Activated CD4-positive, alpha-beta T cell treated with anti-CD3 and anti-CD28 coated beads for 36 hours (primary cell): ENCODE measurements at regions of chr5 and their contacts with region 1.

Region 1: GRCh38 chr5:145825751-145826180 is 9.4 kb downstream of the PRELID2 start:
- DNase-seq: no peak
- ATAC-seq: peak; percentile 44
- H3K4me3 Mint-ChIP-seq: no peak overlapping the region
- H3K27ac Mint-ChIP-seq: no peak overlapping the region
- H3K4me1 Mint-ChIP-seq: peaks cover 3% of the 10 kb centered on the region
- H3K27me3 Mint-ChIP-seq: peaks cover 1% of the 10 kb centered on the region

Region 2: DNA sequence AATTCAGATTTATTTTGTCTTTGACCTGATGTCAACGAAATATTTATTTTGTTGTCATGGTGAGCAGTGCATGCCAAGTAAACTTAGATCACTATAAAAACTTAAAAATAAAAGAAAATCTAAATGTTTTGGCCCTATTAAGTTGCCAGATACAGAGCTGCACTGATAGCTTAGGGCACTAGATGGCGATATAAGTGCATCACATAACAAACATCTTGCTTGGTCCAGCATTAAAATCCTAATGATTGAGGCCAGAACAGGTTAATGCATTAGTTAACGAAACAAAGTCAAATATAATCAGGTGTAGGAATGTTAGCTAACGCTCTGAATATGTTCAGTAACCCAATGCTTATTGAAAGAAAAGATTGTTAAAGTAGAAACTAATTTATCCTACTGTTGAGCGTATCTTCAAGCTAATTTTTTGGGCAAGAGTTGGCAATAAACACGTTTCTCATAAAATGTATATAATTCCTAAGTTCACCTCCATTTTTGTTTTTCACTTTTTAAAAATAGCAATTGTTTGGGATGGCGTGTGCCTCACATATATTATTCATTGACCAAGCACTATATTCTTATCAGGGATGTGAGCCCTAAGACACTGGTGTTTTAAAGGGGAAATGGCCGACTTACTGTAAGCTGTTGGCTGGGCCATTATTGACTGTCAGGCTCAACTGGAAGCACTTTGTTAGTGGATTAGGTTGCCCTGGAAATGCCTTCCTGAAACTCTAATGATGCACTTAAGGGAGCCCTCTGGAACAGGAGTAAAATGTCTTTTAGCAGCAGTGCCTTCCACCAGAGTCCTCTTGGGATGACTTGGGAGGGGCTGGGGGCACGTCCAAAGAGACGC is 1621.8 kb before region 1 on chr5:
- CTCF ChIA-PET with region 1: interaction called, 12 read pairs
- POLR2A ChIA-PET with region 1: no interaction called
- intact Hi-C with region 1: loop called (anchors 1 to 2 kb)
- DNase-seq: peak; percentile 44
- ATAC-seq: peak; percentile 61
- H3K4me3 Mint-ChIP-seq: no peak overlapping the region
- H3K27ac Mint-ChIP-seq: no peak overlapping the region
- H3K4me1 Mint-ChIP-seq: peaks cover 17% of the 10 kb centered on the region
- H3K27me3 Mint-ChIP-seq: peaks cover 44% of the 10 kb centered on the region

Region 3: GRCh38 chr5:144896473-144896872 is 929.3 kb before region 1 on chr5:
- CTCF ChIA-PET with region 1: no interaction called
- POLR2A ChIA-PET with region 1: no interaction called
- intact Hi-C with region 1: no loop called
- DNase-seq: no peak
- ATAC-seq: no peak
- H3K4me3 Mint-ChIP-seq: no peak overlapping the region
- H3K27ac Mint-ChIP-seq: no peak overlapping the region
- H3K4me1 Mint-ChIP-seq: no peaks in the 10 kb centered on the region
- H3K27me3 Mint-ChIP-seq: no peaks in the 10 kb centered on the region

Region 4: DNA sequence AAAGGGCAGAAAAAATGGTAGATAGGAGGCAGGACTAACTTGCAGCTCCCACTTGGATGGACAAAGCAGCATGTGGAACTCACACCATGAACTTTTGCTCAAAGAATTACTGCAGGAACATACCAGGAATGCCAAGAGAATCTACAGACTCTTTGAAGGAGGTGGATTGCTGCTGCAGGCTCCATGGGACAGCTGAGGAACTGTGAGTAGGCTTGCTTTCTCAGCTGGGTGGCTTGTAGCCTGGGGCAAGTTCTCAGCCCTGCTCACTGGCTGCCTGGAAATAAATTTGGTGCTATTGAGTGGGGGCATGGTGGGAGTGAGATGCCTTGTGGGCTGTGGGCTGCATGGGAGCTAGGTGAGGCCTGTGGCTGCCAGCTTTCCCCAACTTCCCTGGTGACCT is 565.1 kb before region 1 on chr5:
- CTCF ChIA-PET with region 1: no interaction called
- POLR2A ChIA-PET with region 1: no interaction called
- intact Hi-C with region 1: no loop called
- DNase-seq: no peak
- ATAC-seq: no peak
- H3K4me3 Mint-ChIP-seq: no peak overlapping the region
- H3K27ac Mint-ChIP-seq: no peak overlapping the region
- H3K4me1 Mint-ChIP-seq: no peaks in the 10 kb centered on the region
- H3K27me3 Mint-ChIP-seq: no peaks in the 10 kb centered on the region

Region 5: GRCh38 chr5:145681686-145682085 is 144.1 kb before region 1 on chr5:
- CTCF ChIA-PET with region 1: interaction called, 6 read pairs
- POLR2A ChIA-PET with region 1: no interaction called
- intact Hi-C with region 1: loop called (anchors 1 kb)
- DNase-seq: peak; percentile 60
- ATAC-seq: peak; percentile 94
- H3K4me3 Mint-ChIP-seq: no peak overlapping the region
- H3K27ac Mint-ChIP-seq: no peak overlapping the region
- H3K4me1 Mint-ChIP-seq: peaks cover 3% of the 10 kb centered on the region
- H3K27me3 Mint-ChIP-seq: no peaks in the 10 kb centered on the region

Region 6: DNA sequence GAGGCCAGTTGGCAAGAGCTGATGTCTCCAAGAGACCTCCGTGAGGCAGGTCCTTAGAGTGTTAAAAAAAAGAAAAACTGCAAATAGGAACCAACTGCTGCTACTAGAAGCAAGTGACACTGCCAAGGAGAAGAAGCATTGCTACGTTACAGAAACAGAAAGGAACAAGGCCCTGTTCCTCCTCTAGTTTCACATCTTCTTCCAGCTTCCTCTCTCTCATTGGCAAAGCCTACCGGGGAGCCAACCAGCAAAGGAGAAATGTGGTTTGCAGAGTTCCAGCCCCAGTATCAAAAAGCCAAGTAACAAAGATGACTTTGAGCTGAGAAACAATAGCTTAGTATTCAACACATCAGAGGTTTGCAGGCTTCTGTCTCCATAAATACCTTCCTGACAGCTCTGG is 136.5 kb before region 1 on chr5:
- CTCF ChIA-PET with region 1: interaction called, 10 read pairs
- POLR2A ChIA-PET with region 1: no interaction called
- intact Hi-C with region 1: no loop called
- DNase-seq: no peak
- ATAC-seq: no peak
- H3K4me3 Mint-ChIP-seq: no peak overlapping the region
- H3K27ac Mint-ChIP-seq: no peak overlapping the region
- H3K4me1 Mint-ChIP-seq: peaks cover 3% of the 10 kb centered on the region
- H3K27me3 Mint-ChIP-seq: no peaks in the 10 kb centered on the region

Region 7: DNA sequence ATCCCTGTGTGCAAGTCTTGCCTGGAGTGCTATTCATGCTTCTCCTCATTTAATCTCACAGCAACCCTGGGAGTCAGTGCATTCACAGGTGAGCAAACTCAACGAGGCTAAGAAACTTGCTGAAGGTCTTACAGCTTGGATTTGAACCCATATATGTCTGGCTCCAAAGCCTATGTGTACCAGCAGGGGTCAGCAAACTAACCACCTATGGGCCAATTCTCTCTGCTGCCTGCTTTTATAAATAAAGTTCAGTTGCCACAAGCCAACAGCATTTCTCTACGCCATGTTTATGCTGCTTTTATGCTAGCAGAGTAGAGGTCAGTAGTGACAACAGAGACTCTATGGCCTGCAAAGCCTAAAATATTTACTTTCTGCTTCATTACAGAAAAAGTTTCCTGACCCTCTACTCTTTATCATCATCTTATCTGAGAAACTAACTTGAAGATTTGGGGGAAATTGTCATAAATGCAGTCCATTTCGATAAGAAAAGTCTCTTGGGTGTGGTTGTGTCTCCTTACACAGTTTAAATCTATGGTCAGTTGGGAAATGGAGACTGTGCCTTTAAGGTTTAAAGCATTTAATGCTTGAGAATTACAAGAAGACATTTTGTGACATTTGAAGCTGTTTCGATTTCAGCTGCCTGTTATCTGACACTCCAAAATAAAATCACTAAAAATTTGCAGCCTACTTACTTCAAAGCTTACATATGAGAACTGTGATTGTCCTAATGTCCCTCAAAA is 128.3 kb before region 1 on chr5:
- CTCF ChIA-PET with region 1: interaction called, 13 read pairs
- POLR2A ChIA-PET with region 1: no interaction called
- intact Hi-C with region 1: loop called (anchors 1 kb)
- DNase-seq: peak; percentile 46
- ATAC-seq: no peak
- H3K4me3 Mint-ChIP-seq: no peak overlapping the region
- H3K27ac Mint-ChIP-seq: no peak overlapping the region
- H3K4me1 Mint-ChIP-seq: no peaks in the 10 kb centered on the region
- H3K27me3 Mint-ChIP-seq: no peaks in the 10 kb centered on the region

Region 8: DNA sequence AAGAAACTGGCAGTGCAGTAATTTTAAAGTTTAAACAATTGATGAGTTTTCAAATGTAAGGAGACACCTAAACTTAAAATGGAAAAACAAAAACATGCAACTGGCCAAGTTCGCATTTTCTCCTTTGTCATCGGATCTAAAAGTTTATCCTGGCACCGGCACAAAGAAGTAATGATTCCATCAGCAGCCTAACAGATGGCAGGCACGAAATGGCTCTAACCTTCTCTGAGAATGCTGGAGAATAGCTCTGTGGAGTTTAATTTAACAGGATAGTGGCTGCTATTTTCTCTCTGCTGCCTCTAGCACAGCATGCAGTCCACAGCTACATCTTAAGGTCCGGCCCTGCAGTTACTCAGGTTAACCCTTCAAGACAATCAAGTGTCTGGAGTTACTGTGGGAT is 72.8 kb before region 1 on chr5:
- CTCF ChIA-PET with region 1: no interaction called
- POLR2A ChIA-PET with region 1: no interaction called
- intact Hi-C with region 1: no loop called
- DNase-seq: no peak
- ATAC-seq: no peak
- H3K4me3 Mint-ChIP-seq: no peak overlapping the region
- H3K27ac Mint-ChIP-seq: no peak overlapping the region
- H3K4me1 Mint-ChIP-seq: no peaks in the 10 kb centered on the region
- H3K27me3 Mint-ChIP-seq: no peaks in the 10 kb centered on the region

Region 9: DNA sequence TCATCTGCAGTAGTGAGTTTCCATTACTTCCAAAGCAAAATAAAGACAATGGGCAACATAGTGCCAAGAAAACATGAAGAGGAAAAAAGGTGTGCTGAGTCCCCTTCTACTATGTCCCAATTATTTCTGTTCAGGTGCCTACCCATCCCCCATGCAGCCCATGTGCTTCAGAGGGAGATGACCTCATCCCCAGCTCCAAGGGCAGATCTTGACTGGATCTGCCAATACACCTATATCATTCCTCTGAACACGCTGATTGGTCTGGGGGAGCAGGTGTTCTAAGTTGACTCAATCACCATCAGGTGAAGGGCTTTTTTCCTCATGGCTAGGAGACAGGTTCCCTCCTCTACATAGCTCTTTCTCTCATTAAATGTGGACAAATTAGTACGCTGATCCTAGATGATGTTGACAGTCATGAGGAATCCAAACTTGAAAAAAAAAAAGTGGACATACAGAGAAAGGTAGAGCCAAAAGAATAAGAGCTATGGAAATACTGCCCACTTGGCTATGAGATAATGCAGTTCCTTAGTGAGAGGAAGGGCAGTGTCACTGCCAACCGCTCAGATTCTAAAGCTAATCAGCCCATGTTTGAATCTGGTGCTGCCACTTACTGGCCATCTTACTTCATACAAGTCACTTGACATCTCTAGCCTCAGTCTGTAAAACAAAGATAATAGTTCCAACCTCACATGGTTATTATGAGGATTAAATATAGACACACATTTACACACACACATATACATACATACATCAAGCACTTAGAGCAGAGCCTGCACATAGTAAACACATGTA is 13.7 kb before region 1 on chr5:
- CTCF ChIA-PET with region 1: no interaction called
- POLR2A ChIA-PET with region 1: no interaction called
- intact Hi-C with region 1: no loop called
- DNase-seq: no peak
- ATAC-seq: no peak
- H3K4me3 Mint-ChIP-seq: no peak overlapping the region
- H3K27ac Mint-ChIP-seq: no peak overlapping the region
- H3K4me1 Mint-ChIP-seq: no peaks in the 10 kb centered on the region
- H3K27me3 Mint-ChIP-seq: no peaks in the 10 kb centered on the region

Region 10: DNA sequence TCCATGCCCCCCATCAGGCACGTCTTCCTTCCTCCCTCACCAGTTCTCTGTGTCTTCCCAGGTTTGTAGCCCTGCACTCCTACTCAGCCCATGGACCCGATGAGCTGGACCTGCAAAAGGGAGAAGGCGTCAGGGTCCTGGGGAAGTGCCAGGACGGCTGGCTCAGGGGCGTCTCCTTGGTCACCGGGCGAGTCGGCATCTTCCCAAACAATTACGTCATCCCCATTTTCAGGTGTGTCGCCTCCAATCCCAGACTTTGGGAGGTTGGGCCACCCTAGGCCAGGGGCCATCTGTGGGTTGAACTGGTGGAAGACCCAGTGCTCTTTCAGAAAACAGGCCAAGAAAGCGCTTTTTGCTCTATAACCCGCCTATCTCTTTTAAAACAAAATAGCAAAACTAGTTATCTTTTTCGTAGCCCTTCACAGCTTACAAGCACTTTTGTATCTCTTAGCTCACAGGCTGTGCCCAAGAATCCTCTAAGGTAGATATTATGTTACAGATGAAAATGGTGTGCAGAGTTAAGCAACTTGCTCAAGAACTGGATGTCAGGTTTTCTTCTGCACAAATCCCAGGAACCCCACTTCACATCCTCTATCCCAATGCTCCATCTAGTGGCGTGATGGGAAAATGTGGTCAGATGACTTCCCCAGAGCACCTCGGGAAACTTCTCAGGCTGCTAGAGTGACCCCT is 223.4 kb after region 1 on chr5:
- CTCF ChIA-PET with region 1: interaction called, 3 read pairs
- POLR2A ChIA-PET with region 1: no interaction called
- intact Hi-C with region 1: loop called (anchors 2 to 5 kb)
- DNase-seq: peak; percentile 58
- ATAC-seq: no peak
- H3K4me3 Mint-ChIP-seq: no peak overlapping the region
- H3K27ac Mint-ChIP-seq: no peak overlapping the region
- H3K4me1 Mint-ChIP-seq: no peaks in the 10 kb centered on the region
- H3K27me3 Mint-ChIP-seq: peaks cover 9% of the 10 kb centered on the region

Region 11: DNA sequence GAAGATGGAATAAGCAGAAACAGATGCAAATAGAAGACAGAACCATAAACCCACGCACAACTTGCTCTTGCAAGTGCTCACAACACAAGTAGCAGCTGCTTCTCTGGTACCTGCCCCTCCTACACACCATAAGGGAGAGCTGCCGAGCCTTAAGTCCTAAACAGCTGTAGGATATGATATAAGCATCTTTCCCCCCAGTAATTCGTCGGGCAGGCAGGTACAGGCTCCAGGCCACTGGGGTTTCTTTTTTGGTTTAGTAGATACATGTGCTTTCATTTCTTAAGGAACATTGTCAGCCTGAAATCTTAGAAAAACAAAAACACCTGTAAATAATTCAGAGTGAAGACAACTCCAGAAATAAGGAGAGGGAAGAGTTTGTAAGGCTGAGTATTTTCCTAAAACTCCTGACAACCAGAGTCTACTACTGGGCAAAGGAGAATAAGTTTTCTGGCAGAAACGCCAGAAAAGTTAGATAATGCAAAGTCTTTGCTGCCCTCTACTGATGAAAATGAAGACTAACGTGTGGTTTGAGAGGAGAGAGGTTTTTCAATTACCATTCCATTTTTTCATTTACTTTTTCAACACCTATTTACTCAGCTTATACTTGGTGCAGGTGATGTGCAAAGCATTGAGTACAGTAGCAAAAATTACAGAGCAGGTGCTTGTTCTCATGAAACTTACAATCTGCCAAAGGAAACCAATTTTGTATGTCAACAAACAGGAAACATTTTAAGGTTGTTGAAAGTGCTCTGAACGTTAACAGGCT is 601.3 kb after region 1 on chr5:
- CTCF ChIA-PET with region 1: no interaction called
- POLR2A ChIA-PET with region 1: no interaction called
- intact Hi-C with region 1: loop called in 1 of 2 experiments (anchors 2 kb)
- DNase-seq: no peak
- ATAC-seq: peak; percentile 53
- H3K4me3 Mint-ChIP-seq: no peak overlapping the region
- H3K27ac Mint-ChIP-seq: no peak overlapping the region
- H3K4me1 Mint-ChIP-seq: peaks cover 4% of the 10 kb centered on the region
- H3K27me3 Mint-ChIP-seq: peaks cover 23% of the 10 kb centered on the region